Motor neuron (in vitro differentiated cells): ENCODE measurements at regions of chr9 and their contacts with region 1.

Region 1: DNA sequence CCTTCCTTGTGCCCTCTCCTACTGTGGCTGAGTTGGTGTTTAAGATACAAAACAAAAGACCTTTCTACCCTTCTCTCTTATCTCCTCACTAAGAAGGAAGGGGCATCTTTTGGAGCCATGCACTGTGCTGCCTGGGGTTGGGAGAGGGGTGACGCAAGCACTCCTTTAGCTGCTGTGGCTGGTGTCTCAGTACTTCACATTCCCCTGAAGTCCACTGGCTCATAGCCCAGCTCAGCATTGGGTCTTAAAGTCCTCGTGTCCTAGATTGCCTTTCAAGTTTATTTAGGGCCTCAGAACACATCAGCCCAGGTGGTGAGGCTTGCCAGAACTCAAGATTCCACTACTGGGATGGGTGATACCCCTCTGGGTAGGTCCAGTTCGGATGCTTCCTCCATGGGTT is 325.9 kb upstream of the CYLC2 start:
- ATAC-seq: no peak
- H3K4me3 ChIP-seq: no peak overlapping the region
- H3K27ac ChIP-seq: no peak overlapping the region
- H3K4me1 ChIP-seq: no peaks in the 10 kb centered on the region

Region 2: GRCh38 chr9:102507044-102507687 is 162.1 kb before region 1 on chr9:
- in situ Hi-C with region 1: no loop called
- ATAC-seq: no peak
- H3K4me3 ChIP-seq: no peak overlapping the region
- H3K27ac ChIP-seq: no peak overlapping the region
- H3K4me1 ChIP-seq: peaks cover 2 to 12% of the 10 kb centered on the region in 2 donors

Region 3: GRCh38 chr9:102767076-102767475 is 97.9 kb after region 1 on chr9:
- in situ Hi-C with region 1: loop called in 1 of 9 experiments (anchors 25 kb)
- ATAC-seq: no peak
- H3K4me3 ChIP-seq: no peak overlapping the region
- H3K27ac ChIP-seq: no peak overlapping the region
- H3K4me1 ChIP-seq: peaks cover 0 to 2% of the 10 kb centered on the region in 2 donors